GM10248 (cell line): ENCODE measurements at regions of chr10 and their contacts with region 1.

Region 1: DNA sequence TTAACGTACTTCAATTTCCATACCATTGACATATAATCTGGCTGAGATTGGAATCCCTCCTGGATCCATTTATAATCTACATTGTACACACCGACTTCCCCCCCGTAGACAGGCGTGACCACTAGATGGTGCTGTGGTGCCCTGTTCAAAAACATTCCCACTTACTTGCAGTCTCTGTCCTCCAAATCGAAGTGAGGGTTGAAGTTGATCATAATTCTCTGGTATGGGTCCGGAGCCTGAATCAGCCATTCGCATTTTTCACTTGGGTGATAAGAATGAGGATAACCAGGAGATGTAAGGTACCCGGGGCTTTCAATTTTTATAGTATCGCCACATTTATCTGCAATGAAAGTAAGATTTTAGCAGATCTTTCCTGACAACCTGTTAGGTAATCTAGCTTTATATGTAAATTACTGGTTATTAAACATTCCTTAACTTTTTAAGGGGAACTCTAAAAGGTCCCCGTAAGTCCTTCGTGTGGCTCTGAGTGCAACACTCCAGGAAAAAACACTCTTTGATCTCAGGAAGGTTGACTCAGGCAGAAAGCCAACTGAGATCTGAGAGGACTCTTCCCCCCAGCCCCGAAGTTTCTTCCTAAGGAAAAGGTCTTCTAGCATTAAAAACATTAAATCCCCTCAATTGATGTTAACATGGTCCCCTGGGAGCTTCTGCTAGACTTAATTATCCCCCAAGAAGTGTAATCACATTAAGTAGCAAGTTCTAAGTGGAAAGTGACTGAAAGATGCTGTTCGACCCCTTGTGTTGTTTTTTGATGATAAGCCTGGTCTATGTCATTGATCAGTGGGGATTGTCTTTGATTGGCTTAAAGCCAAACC is 3.7 kb downstream of the NRP1 start:
- DNase-seq: peak; percentile 41
- CTCF ChIP-seq: peak; percentile 85

Region 2: DNA sequence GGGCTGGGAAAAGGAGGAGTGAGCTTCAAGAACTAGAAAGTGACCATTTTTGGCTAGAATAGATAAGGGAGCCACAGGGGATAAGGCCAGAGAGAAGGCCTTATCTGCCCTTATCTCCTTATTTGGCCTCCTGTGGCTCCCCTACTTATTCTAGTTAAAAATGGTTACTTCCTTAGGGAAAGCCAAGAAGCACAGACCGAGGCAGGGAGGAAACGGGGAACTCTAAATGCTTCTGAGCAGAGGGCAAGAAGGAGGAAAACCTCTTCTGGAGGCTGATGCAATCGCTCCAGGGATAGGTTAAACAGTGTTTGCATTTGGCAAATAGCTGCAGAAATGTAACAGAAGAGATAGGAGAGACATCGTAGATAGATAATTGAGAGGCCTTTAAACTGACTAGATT is 14.9 kb before region 1 on chr10:
- CTCF ChIA-PET with region 1: interaction called, 12 read pairs
- POLR2A ChIA-PET with region 1: no interaction called
- DNase-seq: no peak
- CTCF ChIP-seq: no peak

Region 3: GRCh38 chr10:33410096-33410859 is 79.5 kb after region 1 on chr10:
- CTCF ChIA-PET with region 1: no interaction called
- POLR2A ChIA-PET with region 1: no interaction called
- DNase-seq: no peak
- CTCF ChIP-seq: no peak